Natural killer cell (primary cell): ENCODE measurements at regions of chr10 and their contacts with region 1.

Region 1: GRCh38 chr10:122342293-122343134 is 32.0 kb upstream of the PLEKHA1 start:
- DNase-seq: peak; percentile 39 to 81
- ATAC-seq: peak; percentile 57 to 82 (median 78)
- H3K4me3 ChIP-seq: no peak overlapping the region
- H3K4me3 Mint-ChIP-seq: no peak overlapping the region
- H3K27ac ChIP-seq: no peak overlapping the region
- H3K27ac Mint-ChIP-seq: no peak overlapping the region
- H3K4me1 ChIP-seq: no peaks in the 10 kb centered on the region
- H3K4me1 Mint-ChIP-seq: peaks cover 7 to 19% of the 10 kb centered on the region in 2 donors
- H3K27me3 ChIP-seq: no peaks in the 10 kb centered on the region
- H3K27me3 Mint-ChIP-seq: no peaks in the 10 kb centered on the region
- CTCF ChIP-seq: peak; percentile 85

Region 2: DNA sequence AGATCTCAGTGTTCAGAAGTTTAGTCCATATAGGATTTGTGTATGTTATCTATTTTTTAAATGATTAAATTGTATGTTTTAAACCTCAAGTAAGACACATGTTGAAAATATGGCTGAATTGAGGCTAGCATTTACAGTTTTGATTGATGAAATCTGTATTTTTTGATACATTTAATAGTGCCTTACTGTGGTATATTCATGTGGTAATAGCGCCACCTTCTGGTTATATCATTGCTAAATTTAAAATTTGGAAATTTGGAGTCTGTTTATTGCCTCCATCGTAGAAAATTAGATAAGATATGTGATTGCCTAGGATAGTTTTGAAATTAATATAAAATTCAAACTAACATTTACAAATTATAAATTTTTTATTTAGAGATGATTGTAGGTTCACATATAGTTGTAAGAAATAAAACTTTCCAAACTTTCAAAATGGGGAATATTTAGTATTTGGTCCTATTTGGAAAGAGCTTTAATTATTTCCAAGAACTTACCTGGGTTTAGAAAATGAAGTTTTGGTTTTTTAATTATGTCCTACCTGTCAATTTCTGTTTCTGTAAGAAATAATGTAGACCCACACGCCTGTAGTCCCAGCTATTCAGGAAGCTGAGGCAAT is 92.8 kb after region 1 on chr10:
- intact Hi-C with region 1: loop called (anchors 1 kb)
- DNase-seq: peak in 1 of 2 donors; percentile 78
- ATAC-seq: peak; percentile 42 to 67 (median 58)
- H3K4me3 ChIP-seq: no peak overlapping the region
- H3K4me3 Mint-ChIP-seq: no peak overlapping the region
- H3K27ac ChIP-seq: no peak overlapping the region
- H3K27ac Mint-ChIP-seq: no peak overlapping the region
- H3K4me1 ChIP-seq: no peaks in the 10 kb centered on the region
- H3K4me1 Mint-ChIP-seq: peaks cover 0 to 7% of the 10 kb centered on the region in 2 donors
- H3K27me3 ChIP-seq: no peaks in the 10 kb centered on the region
- H3K27me3 Mint-ChIP-seq: no peaks in the 10 kb centered on the region
- CTCF ChIP-seq: peak; percentile 89